ENCODE measurements at regions of chr19 and their contacts with region 1.

Region 1: DNA sequence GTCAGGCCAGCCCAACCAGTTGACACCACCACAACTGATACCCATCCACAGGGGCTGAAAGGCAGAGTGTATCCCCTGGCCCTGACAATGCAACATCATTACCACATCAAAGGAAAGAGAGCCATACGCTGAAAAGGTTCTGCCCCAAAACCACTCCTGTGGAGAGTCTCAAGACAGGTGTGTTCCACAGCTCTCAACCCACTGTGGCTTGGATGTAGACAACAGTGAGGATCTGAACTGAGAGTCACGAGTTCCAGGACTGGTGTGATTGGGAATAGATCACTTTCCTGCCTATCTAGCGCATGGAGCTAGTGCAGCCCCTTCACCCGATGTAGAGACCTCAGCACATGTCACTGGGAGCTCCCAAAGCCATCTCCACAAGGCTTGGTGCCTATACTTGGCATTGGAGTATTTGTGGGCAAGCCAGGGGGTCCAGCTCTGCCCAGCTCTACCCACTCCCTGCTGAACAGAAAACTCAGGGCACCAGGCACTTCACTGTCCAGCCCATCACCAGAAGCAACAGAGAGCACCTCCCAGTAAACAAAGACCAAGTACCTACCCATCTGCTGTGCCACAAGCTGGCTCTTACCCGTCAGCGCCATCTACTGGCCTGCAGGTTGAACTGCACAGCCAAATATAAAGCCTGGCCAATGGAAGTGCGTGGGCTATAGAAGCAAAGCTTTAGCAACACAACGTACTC is 579.5 kb downstream of the UQCRFS1 start:
- DNase-seq: peak in 1 of 2 donors; percentile 48
- ATAC-seq: peak; percentile 72 to 78
- H3K4me3 ChIP-seq: no peak overlapping the region
- H3K27ac ChIP-seq: no peak overlapping the region
- H3K4me1 ChIP-seq: no peaks in the 10 kb centered on the region
- H3K27me3 ChIP-seq: no peaks in the 10 kb centered on the region
- CTCF ChIP-seq: peak; percentile 77 to 86 (median 83)
- POLR2A ChIP-seq: no peak

Region 2: GRCh38 chr19:28553005-28553404 is 80.5 kb before region 1 on chr19:
- in situ Hi-C with region 1: no loop called
- intact Hi-C with region 1: loop called (anchors 10 kb)
- DNase-seq: no peak
- ATAC-seq: no peak
- H3K4me3 ChIP-seq: no peak overlapping the region
- H3K27ac ChIP-seq: no peak overlapping the region
- H3K4me1 ChIP-seq: no peaks in the 10 kb centered on the region
- H3K27me3 ChIP-seq: no peaks in the 10 kb centered on the region
- CTCF ChIP-seq: no peak
- POLR2A ChIP-seq: no peak

Measured in gastrocnemius medialis (tissue), 4 donors.